Right ventricle myocardium superior (tissue), 1 donor: ENCODE measurements at regions of chr5 and their contacts with region 1.

Region 1: DNA sequence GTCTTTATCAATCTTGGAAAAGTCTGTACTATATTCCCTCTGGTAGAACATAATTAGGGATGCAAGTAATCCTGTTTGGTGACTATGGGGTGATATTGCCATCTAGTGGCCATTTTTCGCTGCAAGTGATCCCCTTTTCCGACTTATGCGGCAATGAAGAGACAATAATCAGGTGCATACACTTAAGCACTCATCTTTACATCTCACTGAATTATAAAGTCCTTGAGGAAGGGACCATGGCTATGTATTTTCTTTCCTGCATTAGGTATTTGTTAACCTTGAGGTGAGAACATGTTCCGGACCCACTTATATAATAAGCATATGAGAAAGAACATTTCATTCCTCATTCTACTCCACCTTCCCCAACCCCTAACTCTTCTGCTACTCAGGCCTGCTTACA is 19.6 kb upstream of the LIX1 start:
- DNase-seq: no peak
- ATAC-seq: peak; percentile 86

Region 2: DNA sequence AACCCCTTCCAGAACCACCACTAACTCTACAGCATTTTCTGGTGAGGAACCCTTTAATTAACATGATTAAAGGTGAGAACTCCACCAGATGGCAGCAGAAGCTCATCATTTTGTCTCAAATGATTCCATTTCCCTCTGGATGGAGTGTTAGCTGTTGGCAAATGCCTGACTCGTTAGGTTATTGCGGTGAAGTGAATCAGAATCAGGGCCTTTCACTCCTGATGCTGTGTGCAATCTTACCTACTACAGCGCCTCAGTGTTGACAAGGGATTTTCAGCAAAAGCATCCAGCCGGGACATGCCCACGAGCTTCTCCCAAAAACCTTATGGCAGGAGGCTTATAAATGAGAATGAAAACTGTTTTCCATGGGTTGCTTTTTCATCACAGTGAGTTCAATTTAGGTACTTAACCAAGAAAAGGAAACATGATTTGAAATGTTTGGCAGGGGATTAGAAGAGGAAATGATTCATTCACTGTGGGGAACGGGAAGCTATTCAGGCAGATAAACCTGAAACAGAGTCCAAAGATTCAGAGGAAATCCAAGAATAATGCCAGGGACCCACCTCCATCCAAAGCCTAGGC is 547.8 kb before region 1 on chr5:
- intact Hi-C with region 1: loop called (anchors 10 kb)
- DNase-seq: no peak
- ATAC-seq: peak; percentile 86

Region 3: GRCh38 chr5:96776621-96777020 is 385.4 kb before region 1 on chr5:
- intact Hi-C with region 1: loop called (anchors 10 kb)
- DNase-seq: no peak
- ATAC-seq: no peak

Region 4: DNA sequence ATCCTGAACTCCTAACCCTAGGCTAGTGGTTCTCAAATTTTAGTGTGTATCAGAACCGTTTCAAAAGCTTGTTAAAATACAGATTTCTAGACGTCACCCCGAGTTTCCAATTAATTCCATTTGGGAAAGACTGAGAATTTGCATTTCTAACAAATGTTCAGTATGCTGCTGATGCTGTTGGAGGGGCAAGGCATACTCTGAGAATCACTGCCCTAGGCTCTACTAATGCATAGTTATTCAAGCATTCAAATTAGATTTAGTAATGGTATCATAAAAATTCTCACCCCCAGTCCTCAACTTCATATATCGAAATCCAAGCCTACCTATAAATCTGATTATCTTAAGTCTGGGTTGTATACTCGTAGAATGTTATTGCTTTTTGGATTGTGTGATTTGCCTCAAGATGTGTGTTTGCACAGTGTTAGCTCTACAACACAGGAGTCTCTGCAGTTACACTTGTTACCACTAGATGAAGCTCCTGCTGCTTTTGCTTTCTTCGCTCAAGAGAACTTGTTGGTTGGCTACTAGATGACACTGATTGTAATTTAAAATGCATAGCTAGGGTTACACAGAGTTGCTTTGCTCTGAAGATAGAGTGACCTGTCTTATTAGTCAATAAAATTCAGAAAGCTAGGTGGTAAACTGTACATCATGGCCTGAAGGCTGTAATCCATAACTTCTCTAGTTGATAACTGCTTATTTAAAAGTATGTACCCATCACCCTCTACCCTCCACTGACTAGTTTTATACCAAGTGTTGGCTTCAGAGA is 293.3 kb before region 1 on chr5:
- intact Hi-C with region 1: loop called (anchors 5 kb)
- DNase-seq: no peak
- ATAC-seq: peak; percentile 95

Region 5: DNA sequence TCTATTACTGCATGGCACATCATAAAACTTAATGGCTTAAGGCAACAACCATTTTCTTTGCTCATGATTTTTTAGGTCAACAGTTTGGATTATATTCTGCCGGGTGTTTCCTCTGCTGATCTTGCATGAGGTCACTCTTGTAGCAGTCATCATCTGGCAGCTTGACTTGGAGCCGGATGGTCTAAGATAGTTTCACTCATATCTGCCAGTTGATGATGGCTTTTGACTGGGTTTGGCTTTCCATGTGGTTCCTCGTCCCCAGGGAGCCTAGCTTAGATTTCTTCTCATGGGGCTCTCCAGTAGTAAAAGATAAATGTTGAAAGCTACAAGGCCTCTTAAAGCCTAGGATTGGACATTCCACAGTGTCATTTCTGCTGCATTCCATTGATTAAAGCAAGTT is 198.8 kb before region 1 on chr5:
- intact Hi-C with region 1: no loop called
- DNase-seq: peak; percentile 65
- ATAC-seq: peak; percentile 88

Region 6: DNA sequence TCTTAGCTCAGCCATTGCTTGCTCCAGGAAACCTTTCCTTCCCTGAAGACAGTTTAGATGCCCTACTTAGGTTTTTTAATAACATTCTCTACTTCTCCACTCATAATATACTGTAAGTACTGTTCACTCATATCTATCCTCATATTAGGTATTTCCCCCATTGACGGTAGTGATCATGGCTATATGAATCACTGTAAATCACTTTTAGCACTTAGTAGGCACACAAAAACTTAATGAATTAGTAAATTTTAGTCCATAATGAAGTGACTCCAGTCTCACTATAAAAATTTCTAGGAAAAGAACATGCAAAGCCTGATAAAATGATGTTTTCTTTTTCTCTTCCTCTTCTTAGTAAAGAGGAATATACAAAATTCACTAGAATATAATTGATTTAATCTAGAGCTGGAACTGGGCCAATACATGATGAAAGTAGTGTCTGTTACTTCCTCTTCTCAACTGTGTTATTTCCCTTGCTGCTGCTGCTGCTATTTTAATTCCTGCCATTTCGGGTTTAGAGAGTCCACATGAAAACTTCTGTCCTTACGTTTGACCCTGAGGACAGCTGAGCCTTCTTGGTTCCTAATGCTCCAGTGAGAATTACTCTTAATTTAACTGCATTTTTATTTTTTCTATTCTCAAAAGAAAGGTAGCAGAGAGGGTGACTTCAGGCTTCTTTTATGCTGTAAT is 152.7 kb before region 1 on chr5:
- intact Hi-C with region 1: loop called (anchors 10 kb)
- DNase-seq: no peak
- ATAC-seq: peak; percentile 68